Left cardiac atrium (tissue), 4 donors: ENCODE measurements at regions of chr4 and their contacts with region 1.

Region 1: DNA sequence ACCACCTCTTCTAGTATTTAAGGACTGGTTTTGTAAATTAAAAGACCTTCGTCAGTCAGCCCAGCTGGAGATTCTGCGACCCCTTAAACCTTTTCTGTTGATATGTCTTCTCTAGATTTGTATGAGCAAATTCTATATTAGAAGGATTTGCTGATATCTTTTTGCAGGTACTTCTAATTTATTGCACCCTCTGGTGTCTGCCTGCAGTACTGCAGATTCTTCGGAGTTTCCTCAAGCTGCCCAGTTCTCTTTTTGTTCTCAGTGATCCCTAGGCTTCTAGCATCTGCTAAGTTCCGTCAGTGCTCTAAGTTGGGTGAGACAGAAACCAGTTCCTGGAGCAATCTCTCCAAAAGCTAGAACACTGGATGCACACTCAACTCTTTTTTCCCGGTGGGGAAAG is 545.2 kb downstream of the C4orf33 start:
- DNase-seq: peak; percentile 30
- ATAC-seq: no peak

Region 2: GRCh38 chr4:128958202-128958601 is 683.0 kb before region 1 on chr4:
- intact Hi-C with region 1: no loop called
- DNase-seq: no peak
- ATAC-seq: no peak

Region 3: GRCh38 chr4:129218360-129218759 is 422.8 kb before region 1 on chr4:
- intact Hi-C with region 1: loop called in 1 of 2 experiments (anchors 5 kb)
- DNase-seq: no peak
- ATAC-seq: peak; percentile 55 to 71

Region 4: GRCh38 chr4:129362674-129363274 is 278.4 kb before region 1 on chr4:
- intact Hi-C with region 1: loop called (anchors 5 to 10 kb)
- DNase-seq: peak; percentile 52
- ATAC-seq: peak in 1 of 2 donors; percentile 68

Region 5: DNA sequence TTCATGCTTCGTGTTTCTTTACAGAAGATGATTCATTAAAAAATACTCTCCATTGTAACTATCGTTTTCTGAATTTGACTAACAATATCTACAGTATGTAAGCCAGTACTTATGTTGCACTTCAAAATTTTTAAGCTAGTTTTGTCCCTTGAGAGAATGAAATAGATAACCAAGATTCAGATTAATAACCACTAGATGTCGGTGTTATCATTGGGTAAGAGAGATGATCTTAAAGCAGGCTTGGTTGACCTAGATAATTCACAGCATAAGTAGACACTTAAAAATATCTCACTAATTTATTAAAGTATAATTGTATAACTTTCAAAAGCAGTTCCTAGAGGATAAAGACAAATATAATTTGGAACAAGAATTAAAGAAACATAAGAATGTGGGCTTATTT is 114.4 kb before region 1 on chr4:
- intact Hi-C with region 1: loop called (anchors 2 to 5 kb)
- DNase-seq: no peak
- ATAC-seq: no peak